ENCODE measurements at regions of chr7 and their contacts with region 1.

Region 1: GRCh38 chr7:151432791-151433521 is 7.0 kb downstream of the CRYGN start:
- DNase-seq: peak in 7 of 9 donors; percentile 29 to 55 (median 53)
- ATAC-seq: peak; percentile 69
- H3K4me3 ChIP-seq: no peak overlapping the region
- H3K4me3 Mint-ChIP-seq: peak overlapping the region; percentile 8 to 79 (median 62)
- H3K27ac ChIP-seq: peak overlapping the region; percentile 25
- H3K27ac Mint-ChIP-seq: peak overlapping the region; percentile 54 to 90 (median 81)
- H3K4me1 ChIP-seq: peaks cover 51 to 62% of the 10 kb centered on the region in 2 donors
- H3K4me1 Mint-ChIP-seq: peaks cover 25 to 72% (median 52%) of the 10 kb centered on the region in 7 donors
- H3K27me3 ChIP-seq: no peaks in the 10 kb centered on the region
- H3K27me3 Mint-ChIP-seq: no peaks in the 10 kb centered on the region

Region 2: GRCh38 chr7:151198945-151199848 is 233.8 kb before region 1 on chr7:
- CTCF ChIA-PET with region 1: no interaction called
- POLR2A ChIA-PET with region 1: no interaction called
- intact Hi-C with region 1: no loop called
- DNase-seq: no peak
- ATAC-seq: no peak
- H3K4me3 ChIP-seq: no peak overlapping the region
- H3K4me3 Mint-ChIP-seq: no peak overlapping the region
- H3K27ac ChIP-seq: no peak overlapping the region
- H3K27ac Mint-ChIP-seq: no peak overlapping the region
- H3K4me1 ChIP-seq: no peaks in the 10 kb centered on the region
- H3K4me1 Mint-ChIP-seq: peaks cover 0 to 3% (median under 1%) of the 10 kb centered on the region in 7 donors
- H3K27me3 ChIP-seq: no peaks in the 10 kb centered on the region
- H3K27me3 Mint-ChIP-seq: peaks cover 0 to 17% (median 6%) of the 10 kb centered on the region in 5 donors

Region 3: GRCh38 chr7:151251328-151251972 is 181.5 kb before region 1 on chr7:
- CTCF ChIA-PET with region 1: no interaction called
- POLR2A ChIA-PET with region 1: no interaction called
- intact Hi-C with region 1: no loop called
- DNase-seq: peak in 1 of 9 donors; percentile 18
- ATAC-seq: no peak
- H3K4me3 ChIP-seq: peak overlapping the region; percentile 9
- H3K4me3 Mint-ChIP-seq: peak overlapping the region in 9 of 10 donors; percentile 69 to 93 (median 73)
- H3K27ac ChIP-seq: no peak overlapping the region
- H3K27ac Mint-ChIP-seq: peak overlapping the region in 1 of 9 donors; percentile 43
- H3K4me1 ChIP-seq: peaks cover 0 to 16% of the 10 kb centered on the region in 2 donors
- H3K4me1 Mint-ChIP-seq: peaks cover 20 to 46% (median 31%) of the 10 kb centered on the region in 7 donors
- H3K27me3 ChIP-seq: peaks cover 0 to 6% of the 10 kb centered on the region in 2 donors
- H3K27me3 Mint-ChIP-seq: peaks cover 39 to 82% (median 59%) of the 10 kb centered on the region in 5 donors

Region 4: GRCh38 chr7:151381348-151382078 is 51.4 kb before region 1 on chr7:
- CTCF ChIA-PET with region 1: no interaction called
- POLR2A ChIA-PET with region 1: no interaction called
- intact Hi-C with region 1: loop called in 1 of 2 experiments (anchors 2 kb)
- DNase-seq: peak in 8 of 9 donors; percentile 39 to 72 (median 54)
- ATAC-seq: peak; percentile 86
- H3K4me3 ChIP-seq: peak overlapping the region; percentile 63
- H3K4me3 Mint-ChIP-seq: peak overlapping the region in 9 of 10 donors; percentile 16 to 90 (median 77)
- H3K27ac ChIP-seq: peak overlapping the region; percentile 62
- H3K27ac Mint-ChIP-seq: peak overlapping the region in 2 of 9 donors; percentile 36 to 80
- H3K4me1 ChIP-seq: peaks cover 12 to 19% of the 10 kb centered on the region in 2 donors
- H3K4me1 Mint-ChIP-seq: peaks cover 6 to 14% (median 9%) of the 10 kb centered on the region in 7 donors
- H3K27me3 ChIP-seq: peaks cover 0 to 6% of the 10 kb centered on the region in 2 donors
- H3K27me3 Mint-ChIP-seq: peaks cover 4 to 29% (median 6%) of the 10 kb centered on the region in 5 donors

Region 5: GRCh38 chr7:151408839-151409666 is 23.9 kb before region 1 on chr7:
- CTCF ChIA-PET with region 1: interaction called, 3 read pairs
- POLR2A ChIA-PET with region 1: interaction called, 3 read pairs
- intact Hi-C with region 1: loop called (anchors 2 kb)
- DNase-seq: peak in 8 of 9 donors; percentile 23 to 71 (median 64)
- ATAC-seq: peak; percentile 88
- H3K4me3 ChIP-seq: peak overlapping the region; percentile 51
- H3K4me3 Mint-ChIP-seq: peak overlapping the region; percentile 67 to 88 (median 78)
- H3K27ac ChIP-seq: no peak overlapping the region
- H3K27ac Mint-ChIP-seq: peak overlapping the region in 6 of 9 donors; percentile 8 to 81 (median 52)
- H3K4me1 ChIP-seq: peaks cover 11 to 24% of the 10 kb centered on the region in 2 donors
- H3K4me1 Mint-ChIP-seq: peaks cover 11 to 24% (median 15%) of the 10 kb centered on the region in 7 donors
- H3K27me3 ChIP-seq: peaks cover 0 to 8% of the 10 kb centered on the region in 2 donors
- H3K27me3 Mint-ChIP-seq: peaks cover 19 to 63% (median 27%) of the 10 kb centered on the region in 5 donors

Region 6: GRCh38 chr7:151415375-151416112 is 17.4 kb before region 1 on chr7:
- CTCF ChIA-PET with region 1: interaction called, 3 read pairs
- POLR2A ChIA-PET with region 1: interaction called, 7 read pairs
- intact Hi-C with region 1: loop called in 1 of 2 experiments (anchors 2 kb)
- DNase-seq: no peak
- ATAC-seq: peak; percentile 87
- H3K4me3 ChIP-seq: no peak overlapping the region
- H3K4me3 Mint-ChIP-seq: no peak overlapping the region
- H3K27ac ChIP-seq: no peak overlapping the region
- H3K27ac Mint-ChIP-seq: no peak overlapping the region
- H3K4me1 ChIP-seq: peaks cover 4 to 7% of the 10 kb centered on the region in 2 donors
- H3K4me1 Mint-ChIP-seq: peaks cover 4 to 16% (median 11%) of the 10 kb centered on the region in 7 donors
- H3K27me3 ChIP-seq: no peaks in the 10 kb centered on the region
- H3K27me3 Mint-ChIP-seq: peaks cover 15 to 65% (median 19%) of the 10 kb centered on the region in 5 donors

Region 7: DNA sequence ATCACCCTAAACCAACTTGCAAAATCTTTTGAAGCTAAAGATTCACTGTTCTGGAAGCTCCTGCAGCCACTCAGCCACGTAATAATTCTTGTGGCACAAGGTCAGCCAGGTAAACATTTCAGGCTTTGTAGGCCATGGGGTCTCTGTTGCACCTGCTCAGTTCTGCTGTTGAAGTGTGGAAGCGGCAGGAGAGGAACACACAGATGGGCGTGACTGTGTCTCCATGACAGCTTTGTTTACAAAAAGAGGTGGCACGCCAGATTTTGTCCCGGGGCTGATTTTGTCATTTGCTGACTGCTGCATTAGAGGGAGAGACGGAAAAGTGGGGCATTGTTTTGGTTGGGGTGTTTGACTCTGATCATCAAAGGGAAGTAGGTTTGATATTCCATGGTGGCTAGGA is 340.8 kb after region 1 on chr7:
- CTCF ChIA-PET with region 1: no interaction called
- POLR2A ChIA-PET with region 1: no interaction called
- intact Hi-C with region 1: no loop called
- DNase-seq: no peak
- ATAC-seq: no peak
- H3K4me3 ChIP-seq: no peak overlapping the region
- H3K4me3 Mint-ChIP-seq: no peak overlapping the region
- H3K27ac ChIP-seq: no peak overlapping the region
- H3K27ac Mint-ChIP-seq: peak overlapping the region in 3 of 9 donors; percentile 29 to 48 (median 33)
- H3K4me1 ChIP-seq: peaks cover 17 to 18% of the 10 kb centered on the region in 2 donors
- H3K4me1 Mint-ChIP-seq: peaks cover 22 to 58% (median 41%) of the 10 kb centered on the region in 7 donors
- H3K27me3 ChIP-seq: no peaks in the 10 kb centered on the region
- H3K27me3 Mint-ChIP-seq: no peaks in the 10 kb centered on the region

Region 8: DNA sequence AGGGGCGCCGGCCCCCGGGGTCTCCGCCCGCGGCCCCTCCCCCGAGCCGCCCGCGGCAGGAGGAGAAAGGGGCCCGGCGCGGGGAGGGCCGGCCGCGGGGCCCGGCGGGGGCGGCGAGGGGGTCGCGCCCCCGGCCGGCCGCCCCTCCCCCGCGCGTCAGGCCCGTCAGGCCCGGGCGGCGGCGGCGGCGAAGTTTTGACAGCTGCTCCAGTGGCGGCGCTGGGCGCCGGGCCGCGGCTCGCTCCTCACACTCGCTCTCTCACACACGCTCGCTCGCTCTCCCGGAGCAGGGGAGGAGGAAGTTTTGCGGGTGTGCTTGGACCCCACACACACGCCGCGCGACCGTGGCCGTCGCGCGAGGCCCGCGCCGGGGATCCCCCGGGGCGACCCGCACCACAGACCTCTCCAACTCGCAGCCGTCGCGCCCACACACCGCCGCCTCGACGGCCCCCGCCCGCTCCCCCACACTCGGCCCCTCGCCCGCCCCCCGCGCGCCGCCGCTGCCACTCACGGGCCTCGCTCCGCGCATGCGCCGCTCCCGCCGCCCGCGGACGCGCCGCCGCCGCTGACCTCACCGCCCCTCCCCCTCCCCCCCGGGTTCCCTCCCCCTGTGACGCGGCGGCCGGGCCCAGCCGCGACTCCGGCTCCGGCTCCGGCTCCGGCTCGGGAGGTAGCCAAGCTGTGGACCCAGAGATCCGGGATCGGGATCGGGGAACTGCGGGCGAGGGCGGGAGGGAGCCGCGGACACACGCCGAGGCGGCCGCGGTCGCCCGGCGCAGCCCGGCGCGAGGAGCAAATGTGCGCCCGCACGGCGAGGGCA is 1003.4 kb after region 1 on chr7:
- CTCF ChIA-PET with region 1: no interaction called
- POLR2A ChIA-PET with region 1: no interaction called
- intact Hi-C with region 1: no loop called
- DNase-seq: peak; percentile 79 to 92 (median 87)
- ATAC-seq: peak; percentile 87
- H3K4me3 ChIP-seq: peak overlapping the region; percentile 75
- H3K4me3 Mint-ChIP-seq: peak overlapping the region; percentile 79 to 93 (median 88)
- H3K27ac ChIP-seq: peak overlapping the region; percentile 97
- H3K27ac Mint-ChIP-seq: peak overlapping the region; percentile 85 to 97 (median 93)
- H3K4me1 ChIP-seq: peaks cover 5 to 7% of the 10 kb centered on the region in 2 donors
- H3K4me1 Mint-ChIP-seq: peaks cover 15 to 35% (median 24%) of the 10 kb centered on the region in 7 donors
- H3K27me3 ChIP-seq: no peaks in the 10 kb centered on the region
- H3K27me3 Mint-ChIP-seq: no peaks in the 10 kb centered on the region